Activated CD4-positive, alpha-beta T cell treated with anti-CD3 and anti-CD28 coated beads for 36 hours (primary cell): ENCODE measurements at regions of chr1 and their contacts with region 1.

Region 1: GRCh38 chr1:110034451-110035235 is at the start of gene STRIP1:
- DNase-seq: peak; percentile 95
- ATAC-seq: peak; percentile 95
- H3K4me3 Mint-ChIP-seq: peak within 1 kb of the TSS; percentile 94
- H3K27ac Mint-ChIP-seq: peak within 1 kb of the TSS; percentile 95
- H3K4me1 Mint-ChIP-seq: peaks cover 47% of the 10 kb centered on the region
- H3K27me3 Mint-ChIP-seq: no peaks in the 10 kb centered on the region
- total RNA-seq, gene STRIP1: 20.7 to 21.5 TPM

Region 2: GRCh38 chr1:109493805-109494539 is 540.7 kb before region 1 on chr1 and contains the start of gene CYB561D1:
- CTCF ChIA-PET with region 1: no interaction called
- POLR2A ChIA-PET with region 1: no interaction called
- intact Hi-C with region 1: loop called in 1 of 2 experiments (anchors 5 kb)
- DNase-seq: peak; percentile 95
- ATAC-seq: peak; percentile 89
- H3K4me3 Mint-ChIP-seq: peak within 1 kb of the TSS; percentile 98
- H3K27ac Mint-ChIP-seq: peak within 1 kb of the TSS; percentile 90
- H3K4me1 Mint-ChIP-seq: peaks cover 45% of the 10 kb centered on the region
- H3K27me3 Mint-ChIP-seq: no peaks in the 10 kb centered on the region
- total RNA-seq, gene CYB561D1: 7.1 to 8.7 TPM

Region 3: DNA sequence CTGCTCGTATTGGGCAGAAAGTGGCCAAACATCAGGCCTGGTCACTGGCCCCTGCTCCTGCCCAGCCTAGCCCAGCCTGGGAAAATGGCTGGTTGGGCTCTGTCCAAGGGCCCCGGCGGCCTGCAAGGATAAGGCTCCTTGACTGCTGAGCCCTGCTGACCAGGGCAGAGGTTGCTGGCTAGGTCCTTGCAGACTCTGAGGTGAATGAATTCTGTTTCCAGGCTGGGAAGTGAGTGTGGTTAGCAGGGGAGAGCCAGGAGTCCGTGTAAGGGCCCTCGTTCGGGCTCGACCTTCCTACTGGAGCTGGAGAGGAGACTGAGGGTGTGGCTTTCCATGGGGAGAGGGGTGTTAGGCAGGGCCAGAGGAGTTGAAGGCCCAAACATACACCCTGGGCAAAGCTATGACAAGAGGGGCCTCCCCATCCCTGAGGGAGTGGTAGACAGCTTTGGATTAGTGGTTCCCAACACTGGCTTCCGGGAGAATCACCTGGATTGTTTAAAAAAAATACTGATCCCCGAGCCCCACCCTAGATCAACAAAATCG is 103.4 kb before region 1 on chr1:
- CTCF ChIA-PET with region 1: no interaction called
- POLR2A ChIA-PET with region 1: no interaction called
- intact Hi-C with region 1: no loop called
- DNase-seq: no peak
- ATAC-seq: no peak
- H3K4me3 Mint-ChIP-seq: no peak overlapping the region
- H3K27ac Mint-ChIP-seq: no peak overlapping the region
- H3K4me1 Mint-ChIP-seq: peaks cover 2% of the 10 kb centered on the region
- H3K27me3 Mint-ChIP-seq: no peaks in the 10 kb centered on the region

Region 4: DNA sequence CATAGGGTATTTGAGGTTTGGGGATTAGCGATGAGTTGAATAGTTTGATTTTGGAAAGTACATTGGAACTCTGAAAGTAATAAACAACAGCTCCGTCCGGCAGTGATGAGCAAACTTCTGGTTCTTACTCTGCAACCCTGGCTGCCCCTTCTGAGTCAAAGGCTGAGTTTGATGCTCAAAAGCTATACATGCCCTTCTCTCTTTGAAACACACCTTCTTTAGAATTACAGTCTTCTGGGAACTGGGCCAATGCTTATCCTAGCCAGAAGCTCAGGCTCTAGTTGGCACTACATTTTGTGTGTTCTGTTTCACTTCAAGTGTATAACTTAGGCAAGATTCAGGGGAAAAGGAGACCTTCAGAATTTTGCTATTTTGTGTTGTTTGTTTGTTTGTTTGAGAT is 40.8 kb before region 1 on chr1:
- CTCF ChIA-PET with region 1: interaction called, 13 read pairs
- POLR2A ChIA-PET with region 1: no interaction called
- intact Hi-C with region 1: no loop called
- DNase-seq: peak; percentile 15
- ATAC-seq: peak; percentile 60
- H3K4me3 Mint-ChIP-seq: no peak overlapping the region
- H3K27ac Mint-ChIP-seq: no peak overlapping the region
- H3K4me1 Mint-ChIP-seq: peaks cover 33% of the 10 kb centered on the region
- H3K27me3 Mint-ChIP-seq: no peaks in the 10 kb centered on the region

Region 5: GRCh38 chr1:110011527-110012041 is 23.1 kb before region 1 on chr1:
- CTCF ChIA-PET with region 1: interaction called, 19 read pairs
- POLR2A ChIA-PET with region 1: no interaction called
- intact Hi-C with region 1: no loop called
- DNase-seq: peak; percentile 41
- ATAC-seq: peak; percentile 95
- H3K4me3 Mint-ChIP-seq: no peak overlapping the region
- H3K27ac Mint-ChIP-seq: no peak overlapping the region
- H3K4me1 Mint-ChIP-seq: no peaks in the 10 kb centered on the region
- H3K27me3 Mint-ChIP-seq: no peaks in the 10 kb centered on the region

Region 6: DNA sequence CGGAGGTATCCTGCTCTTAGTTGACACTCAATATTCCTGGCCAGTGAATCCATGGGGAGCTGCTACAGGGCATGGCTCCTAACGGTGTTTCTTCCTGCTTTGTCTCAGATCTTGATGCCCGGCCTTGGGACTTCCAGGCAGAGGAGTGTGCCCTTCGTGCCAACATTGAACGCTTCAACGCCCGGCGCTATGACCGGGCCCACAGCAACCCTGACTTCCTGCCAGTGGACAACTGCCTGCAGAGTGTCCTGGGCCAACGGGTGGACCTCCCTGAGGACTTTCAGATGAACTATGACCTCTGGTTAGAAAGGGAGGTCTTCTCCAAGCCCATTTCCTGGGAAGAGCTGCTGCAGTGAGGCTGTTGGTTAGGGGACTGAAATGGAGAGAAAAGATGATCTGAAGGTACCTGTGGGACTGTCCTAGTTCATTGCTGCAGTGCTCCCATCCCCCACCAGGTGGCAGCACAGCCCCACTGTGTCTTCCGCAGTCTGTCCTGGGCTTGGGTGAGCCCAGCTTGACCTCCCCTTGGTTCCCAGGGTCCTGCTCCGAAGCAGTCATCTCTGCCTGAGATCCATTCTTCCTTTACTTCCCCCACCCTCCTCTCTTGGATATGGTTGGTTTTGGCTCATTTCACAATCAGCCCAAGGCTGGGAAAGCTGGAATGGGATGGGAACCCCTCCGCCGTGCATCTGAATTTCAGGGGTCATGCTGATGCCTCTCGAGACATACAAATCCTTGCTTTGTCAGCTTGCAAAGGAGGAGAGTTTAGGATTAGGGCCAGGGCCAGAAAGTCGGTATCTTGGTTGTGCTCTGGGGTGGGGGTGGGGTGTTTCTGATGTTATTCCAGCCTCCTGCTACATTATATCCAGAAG is 19.1 kb after region 1 on chr1:
- CTCF ChIA-PET with region 1: interaction called, 37 read pairs
- POLR2A ChIA-PET with region 1: no interaction called
- intact Hi-C with region 1: no loop called
- DNase-seq: peak; percentile 83
- ATAC-seq: peak; percentile 88
- H3K4me3 Mint-ChIP-seq: no peak overlapping the region
- H3K27ac Mint-ChIP-seq: no peak overlapping the region
- H3K4me1 Mint-ChIP-seq: no peaks in the 10 kb centered on the region
- H3K27me3 Mint-ChIP-seq: no peaks in the 10 kb centered on the region

Region 7: GRCh38 chr1:110094931-110095654 is 60.5 kb after region 1 on chr1:
- CTCF ChIA-PET with region 1: no interaction called
- POLR2A ChIA-PET with region 1: no interaction called
- intact Hi-C with region 1: no loop called
- DNase-seq: no peak
- ATAC-seq: no peak
- H3K4me3 Mint-ChIP-seq: no peak overlapping the region
- H3K27ac Mint-ChIP-seq: no peak overlapping the region
- H3K4me1 Mint-ChIP-seq: no peaks in the 10 kb centered on the region
- H3K27me3 Mint-ChIP-seq: peaks cover 7% of the 10 kb centered on the region

Region 8: DNA sequence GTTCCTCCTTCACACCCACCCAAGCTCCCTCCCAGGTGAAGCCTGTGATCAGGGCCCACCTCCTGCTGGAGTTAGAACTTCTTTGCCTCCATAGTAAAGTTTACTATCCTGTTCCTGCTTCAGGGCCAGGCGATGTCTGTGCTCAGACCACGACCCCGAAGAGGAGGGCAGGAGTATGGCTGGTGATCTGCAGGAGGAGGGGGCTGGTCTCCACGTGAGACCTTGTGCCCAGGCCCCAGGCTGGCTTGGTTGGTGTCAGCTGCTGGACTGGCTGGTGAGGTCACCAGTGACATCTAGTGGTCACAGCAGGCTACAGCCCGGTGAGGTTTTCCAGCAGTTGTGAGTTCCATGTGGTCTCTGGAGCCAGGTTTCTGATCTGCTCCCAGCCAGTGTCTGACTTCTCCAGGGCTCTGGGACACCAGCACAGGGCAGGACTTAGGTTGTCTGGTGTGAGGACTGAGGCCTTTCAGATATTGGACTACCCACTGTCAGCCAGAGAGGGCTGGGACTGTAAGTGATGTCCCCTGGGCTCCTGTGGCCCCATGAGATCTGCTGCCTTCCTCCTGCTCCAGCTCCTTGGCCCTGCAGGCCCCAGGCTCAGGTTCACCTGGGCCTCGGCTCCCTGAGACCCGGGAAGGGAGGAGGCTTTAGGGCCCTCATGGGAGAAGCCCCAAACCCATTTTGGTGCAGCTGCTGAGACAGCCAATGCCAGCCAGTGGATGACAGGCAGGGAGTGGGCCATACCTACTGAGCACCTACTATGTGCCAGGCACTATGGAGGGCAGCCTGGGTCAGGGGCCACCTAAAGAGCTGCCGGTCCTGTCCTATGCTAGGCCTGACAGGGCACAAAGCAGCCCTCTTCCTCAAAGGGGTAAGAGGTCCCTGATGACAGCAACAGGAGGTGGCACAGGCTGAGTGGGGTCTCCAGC is 71.6 kb after region 1 on chr1:
- CTCF ChIA-PET with region 1: interaction called, 38 read pairs
- POLR2A ChIA-PET with region 1: no interaction called
- intact Hi-C with region 1: loop called (anchors 1 kb)
- DNase-seq: peak; percentile 78
- ATAC-seq: peak; percentile 98
- H3K4me3 Mint-ChIP-seq: no peak overlapping the region
- H3K27ac Mint-ChIP-seq: no peak overlapping the region
- H3K4me1 Mint-ChIP-seq: no peaks in the 10 kb centered on the region
- H3K27me3 Mint-ChIP-seq: peaks cover 6% of the 10 kb centered on the region

Region 9: GRCh38 chr1:110440877-110441276 is 406.2 kb after region 1 on chr1:
- CTCF ChIA-PET with region 1: no interaction called
- POLR2A ChIA-PET with region 1: no interaction called
- intact Hi-C with region 1: no loop called
- DNase-seq: no peak
- ATAC-seq: no peak
- H3K4me3 Mint-ChIP-seq: no peak overlapping the region
- H3K27ac Mint-ChIP-seq: no peak overlapping the region
- H3K4me1 Mint-ChIP-seq: no peaks in the 10 kb centered on the region
- H3K27me3 Mint-ChIP-seq: no peaks in the 10 kb centered on the region